Endothelial cell of umbilical vein (primary cell): ENCODE measurements at regions of chr18 and their contacts with region 1.

Region 1: DNA sequence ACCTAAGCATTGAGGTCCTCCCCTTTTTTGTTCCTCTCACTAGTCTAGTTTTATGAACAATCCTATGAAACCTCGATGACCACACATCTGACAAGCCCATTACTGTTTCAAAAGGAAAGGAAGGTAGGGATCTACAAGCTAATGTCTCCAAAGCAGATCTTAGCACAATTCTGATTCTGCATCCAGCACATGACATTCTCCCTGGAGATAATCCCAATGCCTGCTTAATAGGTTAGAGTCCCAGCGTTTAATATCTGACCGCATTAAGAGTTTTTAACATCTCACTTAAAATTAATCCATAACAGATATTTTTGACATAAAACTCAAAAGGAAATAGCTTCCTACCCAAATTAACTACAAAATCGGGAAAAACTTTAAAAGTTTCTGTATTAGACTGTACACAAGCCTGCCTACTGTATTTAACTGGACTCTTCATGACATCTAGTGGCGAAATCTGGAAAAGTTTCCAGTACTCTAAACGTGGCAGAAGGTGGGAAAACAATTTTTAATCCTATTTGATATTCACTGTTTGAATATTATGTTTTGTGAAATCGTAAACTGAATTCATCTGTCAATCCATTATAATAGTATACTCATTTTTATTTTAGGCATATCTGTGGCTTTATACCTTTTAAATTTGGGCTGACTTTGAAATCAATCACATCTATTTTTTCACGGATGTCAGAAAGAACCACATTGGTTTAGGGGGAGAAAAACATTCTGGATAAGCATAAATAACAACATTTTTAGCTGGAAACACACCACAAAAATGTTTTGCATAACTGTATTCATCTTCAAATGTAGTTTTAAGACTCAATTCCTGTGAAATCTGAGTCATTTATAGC is 62.4 kb downstream of the TXNL1 start:
- DNase-seq: peak; percentile 82
- H3K4me3 ChIP-seq: no peak overlapping the region
- H3K27ac ChIP-seq: no peak overlapping the region
- H3K4me1 ChIP-seq: peaks cover 25% of the 10 kb centered on the region
- H3K27me3 ChIP-seq: no peaks in the 10 kb centered on the region
- CTCF ChIP-seq: peak; percentile 29 to 33
- POLR2A ChIP-seq: no peak

Region 2: DNA sequence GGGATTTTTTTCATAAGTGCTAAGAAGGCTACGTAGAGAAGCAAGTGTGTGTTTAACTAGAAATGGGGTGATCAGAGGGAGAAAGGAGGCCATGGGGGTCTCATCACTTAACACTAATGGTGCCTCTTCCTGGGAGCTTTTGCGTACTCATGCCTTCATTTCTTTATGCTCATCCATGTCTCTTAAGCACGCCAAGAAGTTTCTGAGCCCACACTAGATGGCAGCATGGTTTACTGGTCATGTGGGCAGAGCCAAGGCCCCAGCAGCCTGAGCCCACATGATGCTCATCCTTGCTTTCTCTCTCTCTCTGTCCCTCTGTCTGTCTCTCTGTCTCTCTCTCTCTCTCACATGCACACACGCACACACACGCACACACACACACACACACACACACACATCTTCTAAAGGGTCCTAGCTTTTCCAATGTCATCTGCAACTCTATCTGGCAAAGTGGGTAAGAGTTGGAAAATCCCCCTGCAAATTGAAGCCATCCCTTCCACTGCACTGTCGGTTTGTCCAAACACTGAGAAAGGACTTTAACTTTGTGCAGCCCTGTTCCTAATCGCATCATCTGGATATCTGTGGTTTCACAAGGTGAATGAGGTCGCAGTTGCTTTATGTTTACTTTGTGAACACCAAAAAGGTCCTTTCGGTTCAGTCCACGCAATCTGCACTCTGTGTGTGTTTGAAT is 1479.6 kb before region 1 on chr18:
- CTCF ChIA-PET with region 1: interaction called, 4 read pairs
- POLR2A ChIA-PET with region 1: no interaction called
- dilution Hi-C with region 1: no loop called
- intact Hi-C with region 1: loop called (anchors 2 kb)
- DNase-seq: peak; percentile 64
- H3K4me3 ChIP-seq: no peak overlapping the region
- H3K27ac ChIP-seq: peak overlapping the region; percentile 80
- H3K4me1 ChIP-seq: peaks cover 39% of the 10 kb centered on the region
- H3K27me3 ChIP-seq: peaks cover 0 to 8% of the 10 kb centered on the region in 2 experiments
- CTCF ChIP-seq: peak; percentile 46 to 59
- POLR2A ChIP-seq: no peak

Region 3: GRCh38 chr18:55343396-55344073 is 1232.5 kb before region 1 on chr18:
- CTCF ChIA-PET with region 1: interaction called, 11 read pairs
- POLR2A ChIA-PET with region 1: no interaction called
- dilution Hi-C with region 1: no loop called
- intact Hi-C with region 1: loop called (anchors 5 kb)
- DNase-seq: peak; percentile 46
- H3K4me3 ChIP-seq: no peak overlapping the region
- H3K27ac ChIP-seq: no peak overlapping the region
- H3K4me1 ChIP-seq: peaks cover 26% of the 10 kb centered on the region
- H3K27me3 ChIP-seq: no peaks in the 10 kb centered on the region
- CTCF ChIP-seq: peak; percentile 9 to 24
- POLR2A ChIP-seq: no peak

Region 4: DNA sequence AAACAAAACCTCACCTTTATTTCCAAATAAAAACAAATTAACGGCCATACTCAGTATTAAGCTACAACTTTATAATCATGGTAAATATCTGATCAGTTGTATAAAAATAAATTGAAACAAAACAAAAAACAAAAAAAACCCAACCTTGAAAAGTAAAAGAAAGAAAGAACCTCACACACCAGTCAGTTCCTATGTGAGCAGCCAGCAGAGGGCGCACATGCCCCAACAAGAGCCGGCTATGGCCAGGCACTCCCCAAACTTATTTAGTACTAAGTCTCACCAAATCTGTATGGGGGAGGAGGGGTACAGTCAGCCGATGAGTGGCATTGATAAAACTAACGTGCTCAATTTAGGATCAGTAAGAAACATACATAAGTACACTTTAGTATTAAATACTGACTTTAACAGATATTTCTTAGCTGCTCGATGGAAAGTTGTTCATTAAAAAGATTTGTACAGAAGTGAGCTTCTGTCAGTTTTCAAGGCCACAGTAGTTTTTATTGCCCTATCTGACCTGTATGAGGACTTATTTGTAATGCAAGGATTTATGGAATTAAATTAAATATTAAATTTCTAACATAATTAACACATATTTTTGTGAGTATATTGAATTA is 1160.7 kb before region 1 on chr18:
- CTCF ChIA-PET with region 1: interaction called, 16 read pairs
- POLR2A ChIA-PET with region 1: no interaction called
- dilution Hi-C with region 1: no loop called
- intact Hi-C with region 1: no loop called
- DNase-seq: peak; percentile 90
- H3K4me3 ChIP-seq: no peak overlapping the region
- H3K27ac ChIP-seq: peak overlapping the region; percentile 13
- H3K4me1 ChIP-seq: peaks cover 45% of the 10 kb centered on the region
- H3K27me3 ChIP-seq: no peaks in the 10 kb centered on the region
- CTCF ChIP-seq: peak; percentile 79 to 91
- POLR2A ChIP-seq: no peak

Region 5: DNA sequence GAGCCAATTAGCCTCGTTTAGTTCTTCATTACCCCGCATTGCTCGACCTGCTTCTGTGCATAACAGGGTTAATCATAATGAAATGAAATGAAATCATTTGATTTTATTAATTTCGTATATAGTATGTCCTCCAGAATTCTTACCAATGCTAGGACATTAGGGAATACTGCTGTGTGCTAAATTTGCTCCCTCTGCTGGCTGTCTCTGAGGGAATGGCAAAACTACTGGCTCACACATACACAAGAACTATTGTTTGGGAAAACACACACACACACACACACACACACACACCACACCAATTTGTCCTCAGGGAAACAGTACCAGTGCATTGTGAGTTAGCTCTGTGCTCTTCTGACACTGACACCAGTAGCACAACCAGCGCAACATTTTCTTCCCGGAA is 714.8 kb before region 1 on chr18:
- CTCF ChIA-PET with region 1: interaction called, 5 read pairs
- POLR2A ChIA-PET with region 1: no interaction called
- dilution Hi-C with region 1: no loop called
- intact Hi-C with region 1: loop called (anchors 10 kb)
- DNase-seq: peak; percentile 65
- H3K4me3 ChIP-seq: no peak overlapping the region
- H3K27ac ChIP-seq: no peak overlapping the region
- H3K4me1 ChIP-seq: peaks cover 5% of the 10 kb centered on the region
- H3K27me3 ChIP-seq: no peaks in the 10 kb centered on the region
- CTCF ChIP-seq: peak; percentile 41 to 44
- POLR2A ChIP-seq: no peak

Region 6: GRCh38 chr18:56043671-56044070 is 532.4 kb before region 1 on chr18:
- CTCF ChIA-PET with region 1: no interaction called
- POLR2A ChIA-PET with region 1: no interaction called
- dilution Hi-C with region 1: no loop called
- intact Hi-C with region 1: no loop called
- DNase-seq: peak; percentile 70
- H3K4me3 ChIP-seq: no peak overlapping the region
- H3K27ac ChIP-seq: no peak overlapping the region
- H3K4me1 ChIP-seq: no peaks in the 10 kb centered on the region
- H3K27me3 ChIP-seq: no peaks in the 10 kb centered on the region
- CTCF ChIP-seq: no peak
- POLR2A ChIP-seq: no peak

Region 7: DNA sequence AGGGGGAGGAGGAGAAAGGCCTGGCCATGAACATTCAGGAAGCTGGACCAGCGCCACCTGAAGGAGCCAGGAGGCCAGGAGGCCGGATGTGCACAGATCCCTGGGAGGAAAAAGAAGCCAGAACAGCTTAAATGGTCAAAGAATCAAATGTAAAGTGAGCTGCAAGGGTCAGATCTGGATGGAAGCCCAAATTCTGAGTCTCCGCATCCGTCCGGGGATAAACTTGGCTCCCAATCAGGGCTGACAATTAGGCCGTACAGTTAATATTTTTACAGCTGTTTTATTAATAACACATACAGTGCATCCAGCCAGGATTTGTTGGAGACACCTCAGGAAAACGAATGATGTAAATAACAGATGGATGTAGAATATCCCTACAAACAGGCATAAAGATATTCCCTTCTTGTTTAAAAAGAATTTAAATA is 492.9 kb before region 1 on chr18:
- CTCF ChIA-PET with region 1: interaction called, 13 read pairs
- POLR2A ChIA-PET with region 1: no interaction called
- dilution Hi-C with region 1: no loop called
- intact Hi-C with region 1: loop called (anchors 1 kb)
- DNase-seq: peak; percentile 99
- H3K4me3 ChIP-seq: no peak overlapping the region
- H3K27ac ChIP-seq: peak overlapping the region; percentile 95
- H3K4me1 ChIP-seq: peaks cover 26% of the 10 kb centered on the region
- H3K27me3 ChIP-seq: no peaks in the 10 kb centered on the region
- CTCF ChIP-seq: peak; percentile 24 to 46
- POLR2A ChIP-seq: peak; percentile 71

Region 8: DNA sequence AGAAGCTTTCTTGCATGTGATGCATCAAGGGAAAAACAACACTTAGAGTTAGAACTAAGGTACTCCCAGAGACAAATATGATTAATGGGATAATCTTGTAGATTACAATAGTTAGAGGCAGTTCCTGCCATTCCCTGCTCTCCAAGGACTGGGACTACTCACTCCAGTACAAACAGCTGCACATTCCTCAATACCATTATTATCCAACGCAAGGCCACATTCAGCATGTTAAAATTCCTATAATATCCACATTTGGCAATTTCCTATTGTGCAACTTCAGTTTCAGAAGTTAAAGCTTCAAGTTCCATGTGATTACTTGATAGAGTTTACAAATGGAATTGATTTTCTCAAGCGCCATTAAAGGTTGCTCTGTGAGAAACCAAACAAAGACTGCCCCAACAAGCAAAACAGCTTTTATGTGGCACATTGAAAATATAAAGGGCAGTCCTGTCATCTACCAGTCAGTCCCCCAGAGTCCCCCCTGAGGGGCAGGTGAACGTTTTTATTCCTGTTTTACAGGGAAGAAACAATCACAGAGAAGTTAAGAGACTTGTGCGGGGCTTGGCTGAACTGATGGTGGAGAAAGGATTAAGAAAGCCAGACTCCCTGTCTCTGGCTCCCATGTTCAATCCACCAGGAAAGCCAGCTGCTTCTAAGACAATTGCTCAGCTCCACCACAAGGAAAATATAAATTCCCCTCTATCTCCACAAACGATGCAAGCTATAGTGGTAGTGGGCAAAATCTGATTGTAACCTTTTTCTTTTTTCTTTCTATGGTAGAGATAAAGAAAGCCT is 10.3 kb before region 1 on chr18:
- CTCF ChIA-PET with region 1: interaction called, 14 read pairs
- POLR2A ChIA-PET with region 1: no interaction called
- dilution Hi-C with region 1: no loop called
- intact Hi-C with region 1: no loop called
- DNase-seq: peak; percentile 45
- H3K4me3 ChIP-seq: no peak overlapping the region
- H3K27ac ChIP-seq: no peak overlapping the region
- H3K4me1 ChIP-seq: no peaks in the 10 kb centered on the region
- H3K27me3 ChIP-seq: peaks cover 0 to 3% of the 10 kb centered on the region in 2 experiments
- CTCF ChIP-seq: no peak
- POLR2A ChIP-seq: no peak